Activated T-helper 1 cell treated with anti-CD3 and anti-CD28 coated beads, Interleukin-12 subunit alpha, Interleukin-12 subunit beta, Interleukin-2, Interleukin-4 antibody, amounts not matched to agents 30 ng/mL and 10 ng/mL and 1 ng/mL, durations not matched to agents 14 hours and 24 hours and 36 hours (primary cell): ENCODE measurements at regions of chr1 and their contacts with region 1.

Region 1: DNA sequence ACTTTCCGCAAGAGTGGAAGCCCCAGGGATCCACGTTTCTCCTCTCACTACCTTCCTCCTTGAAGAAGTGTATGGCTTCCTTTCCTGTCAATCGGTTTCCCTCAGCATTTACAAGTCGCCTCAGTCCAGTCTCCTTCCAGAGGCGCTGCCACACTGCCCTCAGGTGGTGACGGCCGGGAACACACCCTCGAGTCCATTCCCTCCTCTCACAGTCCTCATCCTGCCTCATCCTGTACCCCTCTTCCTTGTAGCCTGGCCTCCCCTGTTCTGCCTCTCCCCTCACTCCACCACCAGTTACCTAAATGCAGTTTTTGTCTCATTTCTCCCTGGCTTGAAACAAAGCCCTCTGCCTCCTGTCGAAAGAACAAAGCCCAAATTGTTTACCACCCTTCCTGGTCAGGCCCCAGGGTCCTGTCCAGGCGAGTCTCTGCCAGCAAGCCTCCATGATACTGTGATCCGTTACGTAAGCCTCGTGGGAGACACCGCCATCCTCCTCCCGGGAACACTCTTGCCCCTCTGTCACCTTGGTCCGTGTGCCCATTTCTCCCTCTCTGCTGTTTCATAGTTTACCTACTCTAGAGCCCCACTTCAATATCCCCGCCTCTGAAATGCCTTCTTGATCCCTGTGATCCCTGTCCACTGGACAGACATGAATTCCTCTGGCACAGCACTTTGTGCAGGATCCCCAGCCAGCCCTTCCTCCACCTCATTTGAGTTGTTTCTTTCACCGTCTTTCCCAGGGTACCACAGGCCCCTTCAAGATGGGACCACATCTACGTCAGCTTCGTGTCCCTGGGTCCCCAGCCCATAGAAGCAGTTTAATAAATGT is 23.3 kb upstream of the LSM10 start:
- DNase-seq: peak; percentile 81
- H3K4me3 Mint-ChIP-seq: no peak overlapping the region
- H3K27ac Mint-ChIP-seq: peak overlapping the region; percentile 48
- H3K4me1 Mint-ChIP-seq: peaks cover 14% of the 10 kb centered on the region
- H3K27me3 Mint-ChIP-seq: peaks cover 2% of the 10 kb centered on the region

Region 2: GRCh38 chr1:36099681-36100341 is 321.2 kb before region 1 on chr1:
- intact Hi-C with region 1: loop called (anchors 1 kb)
- DNase-seq: peak; percentile 65
- H3K4me3 Mint-ChIP-seq: no peak overlapping the region
- H3K27ac Mint-ChIP-seq: no peak overlapping the region
- H3K4me1 Mint-ChIP-seq: no peaks in the 10 kb centered on the region
- H3K27me3 Mint-ChIP-seq: no peaks in the 10 kb centered on the region

Region 3: GRCh38 chr1:36285448-36286101 is 135.5 kb before region 1 on chr1:
- intact Hi-C with region 1: loop called (anchors 1 kb)
- DNase-seq: peak; percentile 53
- H3K4me3 Mint-ChIP-seq: no peak overlapping the region
- H3K27ac Mint-ChIP-seq: peak overlapping the region; percentile 63
- H3K4me1 Mint-ChIP-seq: peaks cover 42% of the 10 kb centered on the region
- H3K27me3 Mint-ChIP-seq: no peaks in the 10 kb centered on the region

Region 4: GRCh38 chr1:36323597-36324352 is 97.3 kb before region 1 on chr1 and contains the start of gene EVA1B:
- intact Hi-C with region 1: loop called (anchors 1 kb)
- DNase-seq: peak; percentile 60
- H3K4me3 Mint-ChIP-seq: peak within 1 kb of the TSS; percentile 80
- H3K27ac Mint-ChIP-seq: peak within 1 kb of the TSS; percentile 64
- H3K4me1 Mint-ChIP-seq: peaks cover 31% of the 10 kb centered on the region
- H3K27me3 Mint-ChIP-seq: peaks cover 6% of the 10 kb centered on the region
- total RNA-seq, gene EVA1B: 10.6 and 10.9 TPM in 2 replicates

Region 5: DNA sequence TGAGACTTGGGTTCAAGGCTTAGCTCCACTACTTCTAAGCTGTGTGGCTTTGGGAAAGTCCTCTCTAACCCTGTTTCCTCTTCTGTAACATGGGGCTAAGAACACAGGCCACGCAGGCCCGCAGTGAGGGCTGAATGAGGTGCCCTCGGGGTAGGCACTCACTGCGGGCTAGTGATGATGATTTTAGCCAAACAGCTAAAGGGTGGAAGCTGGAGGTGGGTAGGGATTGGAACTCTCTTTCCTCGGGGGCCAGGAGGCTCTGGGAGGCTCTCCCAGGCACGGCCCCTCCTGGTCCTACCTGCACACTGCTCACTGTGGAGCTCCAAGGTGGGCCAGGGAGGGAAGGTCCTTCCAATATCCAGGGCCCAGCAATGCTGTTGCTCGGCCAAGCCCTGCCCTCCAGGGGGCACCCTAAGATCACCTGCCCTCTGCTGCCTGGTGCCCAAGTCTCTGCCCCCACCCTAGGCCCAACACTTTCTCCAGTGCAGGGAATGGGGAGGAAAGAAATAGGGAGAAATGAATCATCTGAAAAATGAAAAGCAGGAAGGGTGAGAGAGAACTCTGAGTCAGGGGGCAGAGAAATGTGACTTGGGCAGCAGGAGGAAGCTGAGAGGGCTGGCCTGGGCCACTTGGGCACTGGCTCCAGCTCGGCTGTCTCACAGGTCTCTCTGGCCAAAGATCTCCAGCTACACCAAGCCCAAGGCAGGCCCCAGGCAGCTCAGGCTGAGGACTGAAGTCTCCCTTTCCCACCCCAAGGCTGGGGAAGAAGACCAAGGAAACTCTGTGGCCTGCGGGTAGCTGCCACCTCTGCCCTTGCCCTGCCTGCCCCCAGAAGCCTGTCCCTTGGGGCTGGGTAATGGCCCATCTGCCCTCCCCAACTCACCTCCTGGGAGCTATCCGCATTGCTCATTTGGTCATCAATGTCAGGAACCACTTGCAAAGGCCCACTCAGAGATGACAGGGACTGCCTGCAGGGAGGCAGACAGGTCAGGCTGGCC is 78.3 kb before region 1 on chr1:
- intact Hi-C with region 1: loop called (anchors 1 kb)
- DNase-seq: peak; percentile 37
- H3K4me3 Mint-ChIP-seq: no peak overlapping the region
- H3K27ac Mint-ChIP-seq: peak overlapping the region; percentile 44
- H3K4me1 Mint-ChIP-seq: peaks cover 15% of the 10 kb centered on the region
- H3K27me3 Mint-ChIP-seq: no peaks in the 10 kb centered on the region

Region 6: GRCh38 chr1:36369061-36369861 is 51.8 kb before region 1 on chr1:
- intact Hi-C with region 1: loop called (anchors 1 kb)
- DNase-seq: peak; percentile 65
- H3K4me3 Mint-ChIP-seq: no peak overlapping the region
- H3K27ac Mint-ChIP-seq: peak overlapping the region; percentile 35
- H3K4me1 Mint-ChIP-seq: peaks cover 69% of the 10 kb centered on the region
- H3K27me3 Mint-ChIP-seq: no peaks in the 10 kb centered on the region

Region 7: GRCh38 chr1:36380143-36380619 is 40.9 kb before region 1 on chr1:
- intact Hi-C with region 1: no loop called
- DNase-seq: no peak
- H3K4me3 Mint-ChIP-seq: no peak overlapping the region
- H3K27ac Mint-ChIP-seq: peak overlapping the region; percentile 38
- H3K4me1 Mint-ChIP-seq: peaks cover 64% of the 10 kb centered on the region
- H3K27me3 Mint-ChIP-seq: no peaks in the 10 kb centered on the region

Region 8: DNA sequence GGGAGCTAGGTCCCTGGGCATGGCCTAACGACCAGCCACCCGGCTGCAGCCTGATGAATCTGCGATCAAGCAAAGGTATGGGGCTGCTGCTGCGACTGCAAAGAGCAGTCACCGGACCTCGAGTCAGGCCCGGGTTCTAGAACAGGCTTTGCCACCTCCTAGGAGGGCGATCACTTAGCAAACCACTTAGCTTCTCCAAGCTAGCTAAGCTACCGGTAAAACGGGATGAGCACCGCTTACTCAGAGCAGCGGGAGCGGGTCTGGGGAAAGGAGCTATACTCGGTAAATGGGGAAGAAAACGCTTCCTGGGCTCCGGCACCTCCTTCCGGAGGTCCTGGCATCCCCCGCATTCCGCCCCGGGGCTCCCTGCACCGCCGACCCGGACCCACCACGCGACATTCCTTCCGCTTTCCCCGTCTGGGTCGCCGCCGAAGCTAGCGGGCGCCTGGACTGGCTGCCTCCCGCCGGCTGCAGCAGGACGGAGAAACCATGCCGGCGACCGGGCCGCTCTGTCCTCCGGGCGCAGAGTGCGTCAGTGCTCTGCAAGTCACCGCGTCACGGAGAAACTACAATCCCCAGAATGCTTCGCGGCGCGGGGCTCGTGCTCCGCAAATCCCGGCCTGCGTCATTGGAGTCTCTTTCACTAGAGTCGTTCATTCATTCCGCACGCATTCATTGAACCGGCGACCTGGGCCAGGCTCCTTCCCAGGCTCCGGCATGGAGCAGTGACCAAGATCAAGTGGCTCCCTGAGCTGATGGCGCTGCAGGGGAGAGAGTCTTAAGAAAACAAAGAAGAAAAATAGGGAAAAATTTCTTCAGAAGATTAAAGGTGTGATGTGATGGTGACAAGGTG is 23.4 kb before region 1 on chr1 and contains the start of gene LSM10:
- intact Hi-C with region 1: loop called (anchors 2 kb)
- DNase-seq: peak; percentile 88
- H3K4me3 Mint-ChIP-seq: peak within 1 kb of the TSS; percentile 97
- H3K27ac Mint-ChIP-seq: peak within 1 kb of the TSS; percentile 98
- H3K4me1 Mint-ChIP-seq: peaks cover 29% of the 10 kb centered on the region
- H3K27me3 Mint-ChIP-seq: no peaks in the 10 kb centered on the region
- total RNA-seq, gene LSM10: 57.5 and 63.8 TPM in 2 replicates